CD8-positive, alpha-beta T cell (primary cell): ENCODE measurements at regions of chr1 and their contacts with region 1.

Region 1: DNA sequence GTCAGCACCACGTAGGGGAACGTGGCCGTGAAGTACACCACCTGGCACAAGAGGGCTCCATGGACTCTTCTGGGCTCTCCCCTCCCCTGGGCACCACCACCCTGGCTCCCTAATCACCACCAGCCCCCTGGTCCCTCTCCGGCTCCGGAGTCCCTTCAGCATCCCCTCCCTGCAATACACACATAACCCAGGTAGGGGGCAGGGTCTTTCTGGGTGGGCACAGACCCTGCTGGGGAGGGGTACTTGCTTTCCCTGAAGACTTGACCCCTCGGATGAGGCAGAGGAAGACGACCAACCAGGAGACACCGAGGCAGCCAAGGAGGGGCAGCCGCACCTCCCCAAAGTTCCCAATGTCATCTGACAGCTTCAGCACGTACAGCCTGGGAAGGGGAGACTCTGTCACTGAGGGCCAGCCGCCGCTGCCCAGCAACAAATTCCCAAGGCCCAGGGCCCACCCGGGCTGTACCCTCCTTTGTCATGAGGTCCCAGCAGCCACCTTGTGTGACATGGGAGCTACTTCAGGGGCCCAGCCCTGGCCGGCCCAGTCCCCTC is 11.3 kb downstream of the CCDC24 start:
- DNase-seq: no peak
- ATAC-seq: no peak
- H3K4me3 ChIP-seq: no peak overlapping the region
- H3K4me3 Mint-ChIP-seq: no peak overlapping the region
- H3K27ac ChIP-seq: no peak overlapping the region
- H3K27ac Mint-ChIP-seq: no peak overlapping the region
- H3K4me1 ChIP-seq: no peaks in the 10 kb centered on the region
- H3K4me1 Mint-ChIP-seq: no peaks in the 10 kb centered on the region
- H3K27me3 ChIP-seq: no peaks in the 10 kb centered on the region
- H3K27me3 Mint-ChIP-seq: no peaks in the 10 kb centered on the region
- CTCF ChIP-seq: no peak

Region 2: GRCh38 chr1:43991476-43992231 is 11.0 kb before region 1 on chr1 and contains the start of gene CCDC24:
- CTCF ChIA-PET with region 1: interaction called, 26 read pairs
- POLR2A ChIA-PET with region 1: no interaction called
- intact Hi-C with region 1: no loop called
- DNase-seq: peak; percentile 43 to 85 (median 76)
- ATAC-seq: peak; percentile 81
- H3K4me3 ChIP-seq: peak within 1 kb of the TSS; percentile 74 to 81
- H3K4me3 Mint-ChIP-seq: peak within 1 kb of the TSS; percentile 90
- H3K27ac ChIP-seq: peak within 1 kb of the TSS; percentile 33 to 43
- H3K27ac Mint-ChIP-seq: peak within 1 kb of the TSS; percentile 72
- H3K4me1 ChIP-seq: peaks cover 12% of the 10 kb centered on the region
- H3K4me1 Mint-ChIP-seq: peaks cover 8% of the 10 kb centered on the region
- H3K27me3 ChIP-seq: no peaks in the 10 kb centered on the region
- H3K27me3 Mint-ChIP-seq: no peaks in the 10 kb centered on the region
- CTCF ChIP-seq: no peak
- total RNA-seq, gene CCDC24: 0.33 to 0.71 TPM

Region 3: GRCh38 chr1:44012941-44013609 is 10.4 kb after region 1 on chr1:
- CTCF ChIA-PET with region 1: interaction called, 35 read pairs
- POLR2A ChIA-PET with region 1: no interaction called
- intact Hi-C with region 1: no loop called
- DNase-seq: no peak
- ATAC-seq: peak; percentile 42
- H3K4me3 ChIP-seq: no peak overlapping the region
- H3K4me3 Mint-ChIP-seq: no peak overlapping the region
- H3K27ac ChIP-seq: no peak overlapping the region
- H3K27ac Mint-ChIP-seq: no peak overlapping the region
- H3K4me1 ChIP-seq: peaks cover 17% of the 10 kb centered on the region
- H3K4me1 Mint-ChIP-seq: peaks cover 18% of the 10 kb centered on the region
- H3K27me3 ChIP-seq: no peaks in the 10 kb centered on the region
- H3K27me3 Mint-ChIP-seq: no peaks in the 10 kb centered on the region
- CTCF ChIP-seq: no peak

Region 4: GRCh38 chr1:44021581-44022321 is 19.1 kb after region 1 on chr1:
- CTCF ChIA-PET with region 1: interaction called, 337 read pairs
- POLR2A ChIA-PET with region 1: no interaction called
- intact Hi-C with region 1: no loop called
- DNase-seq: no peak
- ATAC-seq: no peak
- H3K4me3 ChIP-seq: no peak overlapping the region
- H3K4me3 Mint-ChIP-seq: no peak overlapping the region
- H3K27ac ChIP-seq: no peak overlapping the region
- H3K27ac Mint-ChIP-seq: no peak overlapping the region
- H3K4me1 ChIP-seq: no peaks in the 10 kb centered on the region
- H3K4me1 Mint-ChIP-seq: no peaks in the 10 kb centered on the region
- H3K27me3 ChIP-seq: no peaks in the 10 kb centered on the region
- H3K27me3 Mint-ChIP-seq: no peaks in the 10 kb centered on the region
- CTCF ChIP-seq: no peak

Region 5: GRCh38 chr1:44029906-44030604 is 27.4 kb after region 1 on chr1:
- CTCF ChIA-PET with region 1: interaction called, 337 read pairs
- POLR2A ChIA-PET with region 1: no interaction called
- intact Hi-C with region 1: no loop called
- DNase-seq: peak; percentile 57 to 90 (median 85)
- ATAC-seq: peak; percentile 78
- H3K4me3 ChIP-seq: peak overlapping the region; percentile 64 to 76
- H3K4me3 Mint-ChIP-seq: peak overlapping the region; percentile 97
- H3K27ac ChIP-seq: peak overlapping the region; percentile 51 to 60
- H3K27ac Mint-ChIP-seq: peak overlapping the region; percentile 95
- H3K4me1 ChIP-seq: peaks cover 12% of the 10 kb centered on the region
- H3K4me1 Mint-ChIP-seq: peaks cover 20% of the 10 kb centered on the region
- H3K27me3 ChIP-seq: no peaks in the 10 kb centered on the region
- H3K27me3 Mint-ChIP-seq: no peaks in the 10 kb centered on the region
- CTCF ChIP-seq: no peak

Region 6: DNA sequence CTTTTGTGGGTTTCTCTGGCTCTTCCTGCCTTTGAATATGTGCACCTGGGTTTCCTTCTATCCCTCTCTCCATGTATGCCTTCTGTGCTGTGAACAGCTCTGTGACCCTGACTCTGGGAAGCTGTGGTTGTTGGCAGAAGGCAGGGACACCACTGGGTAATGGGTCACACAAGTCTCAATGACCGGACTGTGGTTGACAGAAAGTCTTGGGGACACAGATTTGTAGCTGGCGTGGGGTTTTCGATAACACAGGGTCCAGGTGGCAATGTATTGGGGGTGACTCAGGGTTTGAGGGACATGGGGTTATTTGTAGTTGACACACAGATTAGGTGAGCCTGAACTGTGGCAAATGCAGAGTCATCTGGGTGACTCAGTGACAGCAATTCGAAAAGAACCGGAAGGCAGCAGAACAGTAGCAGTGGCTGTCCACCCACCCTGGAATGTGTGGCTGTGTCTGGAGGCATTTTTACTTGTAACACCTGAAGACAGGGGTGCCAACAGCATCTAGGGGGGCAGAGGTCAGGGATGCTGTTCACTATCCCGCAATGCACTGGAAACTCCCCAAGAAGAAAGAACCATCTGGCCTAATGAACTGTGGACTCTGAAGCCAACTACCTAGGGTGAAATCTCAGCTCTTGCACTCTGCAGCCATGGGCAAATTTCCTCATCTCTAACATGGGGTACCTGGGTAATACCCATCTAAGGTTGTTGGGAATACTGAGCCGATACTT is 41.6 kb after region 1 on chr1:
- CTCF ChIA-PET with region 1: interaction called, 91 read pairs
- POLR2A ChIA-PET with region 1: no interaction called
- intact Hi-C with region 1: loop called (anchors 1 kb)
- DNase-seq: no peak
- ATAC-seq: no peak
- H3K4me3 ChIP-seq: no peak overlapping the region
- H3K4me3 Mint-ChIP-seq: no peak overlapping the region
- H3K27ac ChIP-seq: no peak overlapping the region
- H3K27ac Mint-ChIP-seq: no peak overlapping the region
- H3K4me1 ChIP-seq: no peaks in the 10 kb centered on the region
- H3K4me1 Mint-ChIP-seq: no peaks in the 10 kb centered on the region
- H3K27me3 ChIP-seq: no peaks in the 10 kb centered on the region
- H3K27me3 Mint-ChIP-seq: peaks cover 15% of the 10 kb centered on the region
- CTCF ChIP-seq: no peak

Region 7: GRCh38 chr1:44049839-44050238 is 47.2 kb after region 1 on chr1:
- CTCF ChIA-PET with region 1: interaction called, 91 read pairs
- POLR2A ChIA-PET with region 1: no interaction called
- intact Hi-C with region 1: loop called (anchors 1 kb)
- DNase-seq: no peak
- ATAC-seq: no peak
- H3K4me3 ChIP-seq: no peak overlapping the region
- H3K4me3 Mint-ChIP-seq: no peak overlapping the region
- H3K27ac ChIP-seq: no peak overlapping the region
- H3K27ac Mint-ChIP-seq: no peak overlapping the region
- H3K4me1 ChIP-seq: no peaks in the 10 kb centered on the region
- H3K4me1 Mint-ChIP-seq: no peaks in the 10 kb centered on the region
- H3K27me3 ChIP-seq: no peaks in the 10 kb centered on the region
- H3K27me3 Mint-ChIP-seq: peaks cover 15% of the 10 kb centered on the region
- CTCF ChIP-seq: no peak